Activated CD4-positive, alpha-beta memory T cell treated with anti-CD3 and anti-CD28 coated beads, Interleukin-2, amount 10 ng/mL, durations not matched to agents 7 days and 5 days (primary cell): ENCODE measurements at regions of chr2 and their contacts with region 1.

Region 1: DNA sequence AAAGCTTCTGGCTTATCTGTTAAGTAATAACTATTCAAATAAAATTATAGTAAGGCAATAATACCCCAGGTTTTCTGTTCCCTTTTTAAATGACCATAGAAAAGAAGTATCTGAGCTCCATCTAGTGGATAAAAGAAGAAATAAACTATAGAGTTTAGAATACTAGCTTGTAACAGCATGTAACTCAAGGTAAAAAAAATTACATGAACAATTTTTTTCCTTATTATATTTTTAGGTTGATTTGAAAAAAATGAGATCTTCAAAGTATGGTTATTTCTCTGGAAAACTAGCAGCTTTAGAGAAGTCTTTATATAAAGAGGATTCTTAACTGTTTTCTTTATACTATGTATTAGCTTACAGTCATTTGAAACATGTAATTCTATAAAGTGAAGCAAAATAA is 58.1 kb downstream of the NCKAP1 start:
- DNase-seq: no peak
- H3K4me3 Mint-ChIP-seq: no peak overlapping the region
- H3K27ac Mint-ChIP-seq: no peak overlapping the region
- H3K4me1 Mint-ChIP-seq: no peaks in the 10 kb centered on the region
- H3K27me3 Mint-ChIP-seq: no peaks in the 10 kb centered on the region

Region 2: DNA sequence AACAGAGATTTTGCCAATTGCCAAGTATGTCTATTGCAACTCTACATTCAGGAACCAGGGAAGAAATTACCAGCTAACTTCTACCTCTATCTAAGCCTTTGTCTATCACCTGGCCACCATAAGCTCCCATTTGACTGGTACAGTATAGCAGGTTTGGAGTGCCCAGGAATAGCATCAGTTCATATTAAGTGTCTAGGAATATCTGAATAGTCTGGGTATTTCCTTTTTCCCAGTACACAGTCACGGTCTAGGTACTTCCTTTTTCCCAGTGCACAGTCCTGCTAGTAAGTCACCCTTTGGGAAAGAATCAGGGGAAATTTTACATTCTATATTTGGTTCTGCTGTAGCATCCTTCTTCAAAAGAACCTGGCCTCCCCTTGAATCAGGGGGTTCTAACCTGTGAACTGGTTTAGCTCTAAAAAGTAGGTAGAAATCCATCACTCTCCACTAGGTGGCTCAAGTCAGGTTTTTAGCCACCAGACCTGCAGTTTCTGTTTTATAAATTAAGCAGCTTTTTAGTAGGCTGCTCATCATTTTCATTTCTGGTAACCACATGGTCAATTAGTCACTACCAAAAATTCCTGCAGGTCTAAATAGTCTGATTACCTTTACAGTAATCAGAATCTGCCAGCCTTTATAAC is 313.3 kb before region 1 on chr2:
- CTCF ChIA-PET with region 1: interaction called, 27 read pairs
- POLR2A ChIA-PET with region 1: no interaction called
- DNase-seq: no peak
- H3K4me3 Mint-ChIP-seq: no peak overlapping the region
- H3K27ac Mint-ChIP-seq: no peak overlapping the region
- H3K4me1 Mint-ChIP-seq: no peaks in the 10 kb centered on the region
- H3K27me3 Mint-ChIP-seq: peaks cover 7% of the 10 kb centered on the region

Region 3: GRCh38 chr2:182767578-182767977 is 212.5 kb before region 1 on chr2:
- CTCF ChIA-PET with region 1: interaction called, 16 read pairs
- POLR2A ChIA-PET with region 1: no interaction called
- DNase-seq: no peak
- H3K4me3 Mint-ChIP-seq: no peak overlapping the region
- H3K27ac Mint-ChIP-seq: no peak overlapping the region
- H3K4me1 Mint-ChIP-seq: no peaks in the 10 kb centered on the region
- H3K27me3 Mint-ChIP-seq: no peaks in the 10 kb centered on the region

Region 4: GRCh38 chr2:182784777-182785176 is 195.3 kb before region 1 on chr2:
- CTCF ChIA-PET with region 1: interaction called, 14 read pairs
- POLR2A ChIA-PET with region 1: no interaction called
- DNase-seq: no peak
- H3K4me3 Mint-ChIP-seq: no peak overlapping the region
- H3K27ac Mint-ChIP-seq: no peak overlapping the region
- H3K4me1 Mint-ChIP-seq: no peaks in the 10 kb centered on the region
- H3K27me3 Mint-ChIP-seq: no peaks in the 10 kb centered on the region